ENCODE measurements at regions of chr3 and their contacts with region 1.

Region 1: GRCh38 chr3:17841190-17841828 is 98.9 kb upstream of the TBC1D5 start:
- DNase-seq: peak; percentile 45
- ATAC-seq: peak; percentile 99
- H3K4me3 ChIP-seq: no peak overlapping the region
- H3K27ac ChIP-seq: no peak overlapping the region
- H3K4me1 ChIP-seq: no peaks in the 10 kb centered on the region
- H3K27me3 ChIP-seq: no peaks in the 10 kb centered on the region
- CTCF ChIP-seq: peak; percentile 91 to 98 (median 95)
- POLR2A ChIP-seq: no peak
- RAD21 ChIP-seq: peak; percentile 96

Region 2: GRCh38 chr3:17258823-17259436 is 582.4 kb before region 1 on chr3:
- CTCF ChIA-PET with region 1: interaction called, 3 read pairs
- POLR2A ChIA-PET with region 1: no interaction called
- RAD21 ChIA-PET with region 1: no interaction called
- intact Hi-C with region 1: loop called (anchors 5 kb)
- DNase-seq: peak; percentile 13
- ATAC-seq: no peak
- H3K4me3 ChIP-seq: no peak overlapping the region
- H3K27ac ChIP-seq: no peak overlapping the region
- H3K4me1 ChIP-seq: no peaks in the 10 kb centered on the region
- H3K27me3 ChIP-seq: no peaks in the 10 kb centered on the region
- CTCF ChIP-seq: peak; percentile 46 to 69 (median 69); a peak in 5 of 6 replicates
- POLR2A ChIP-seq: no peak
- RAD21 ChIP-seq: peak; percentile 68

Region 3: DNA sequence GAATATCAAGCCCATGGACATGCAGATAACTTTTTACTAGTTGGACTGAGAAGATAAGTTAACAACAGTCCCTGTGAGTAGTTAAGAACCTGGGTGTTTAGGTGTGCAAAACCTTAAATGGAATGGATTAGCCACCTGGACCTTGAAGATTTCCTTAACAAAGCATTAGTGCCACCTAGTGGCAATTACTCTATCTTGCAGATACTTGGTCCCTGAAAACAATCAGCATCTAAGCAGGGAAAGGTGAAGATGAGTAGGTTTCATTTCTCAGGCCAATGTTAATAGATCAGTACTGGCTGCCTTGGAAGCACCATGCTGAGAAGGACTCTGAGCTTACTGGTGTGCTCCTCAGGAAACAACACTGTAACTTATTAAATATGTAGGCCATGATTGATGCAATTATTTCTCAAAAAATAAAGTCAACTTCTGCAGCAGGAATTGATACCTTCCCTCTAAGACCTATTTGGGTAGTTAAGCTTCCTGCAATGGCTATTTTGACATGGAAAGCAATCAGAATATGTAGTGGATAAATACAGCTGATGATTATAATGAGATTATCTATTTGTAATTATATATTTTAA is 428.3 kb before region 1 on chr3:
- CTCF ChIA-PET with region 1: interaction called, 11 read pairs
- POLR2A ChIA-PET with region 1: no interaction called
- RAD21 ChIA-PET with region 1: no interaction called
- intact Hi-C with region 1: no loop called
- DNase-seq: peak; percentile 56
- ATAC-seq: peak; percentile 84
- H3K4me3 ChIP-seq: no peak overlapping the region
- H3K27ac ChIP-seq: no peak overlapping the region
- H3K4me1 ChIP-seq: no peaks in the 10 kb centered on the region
- H3K27me3 ChIP-seq: no peaks in the 10 kb centered on the region
- CTCF ChIP-seq: peak; percentile 66 to 83 (median 74); a peak in 5 of 6 replicates
- POLR2A ChIP-seq: no peak
- RAD21 ChIP-seq: peak; percentile 82

Region 4: GRCh38 chr3:17544632-17545031 is 296.7 kb before region 1 on chr3:
- CTCF ChIA-PET with region 1: interaction called, 12 read pairs
- POLR2A ChIA-PET with region 1: no interaction called
- RAD21 ChIA-PET with region 1: interaction called in 1 of 2 experiments, 4 read pairs
- intact Hi-C with region 1: loop called (anchors 2 kb)
- DNase-seq: no peak
- ATAC-seq: no peak
- H3K4me3 ChIP-seq: no peak overlapping the region
- H3K27ac ChIP-seq: no peak overlapping the region
- H3K4me1 ChIP-seq: no peaks in the 10 kb centered on the region
- H3K27me3 ChIP-seq: no peaks in the 10 kb centered on the region
- CTCF ChIP-seq: peak in 2 of 3 experiments; percentile 11 to 36; a peak in 3 of 6 replicates
- POLR2A ChIP-seq: no peak
- RAD21 ChIP-seq: peak; percentile 36; the same call in 1 of the 2 replicates

Region 5: DNA sequence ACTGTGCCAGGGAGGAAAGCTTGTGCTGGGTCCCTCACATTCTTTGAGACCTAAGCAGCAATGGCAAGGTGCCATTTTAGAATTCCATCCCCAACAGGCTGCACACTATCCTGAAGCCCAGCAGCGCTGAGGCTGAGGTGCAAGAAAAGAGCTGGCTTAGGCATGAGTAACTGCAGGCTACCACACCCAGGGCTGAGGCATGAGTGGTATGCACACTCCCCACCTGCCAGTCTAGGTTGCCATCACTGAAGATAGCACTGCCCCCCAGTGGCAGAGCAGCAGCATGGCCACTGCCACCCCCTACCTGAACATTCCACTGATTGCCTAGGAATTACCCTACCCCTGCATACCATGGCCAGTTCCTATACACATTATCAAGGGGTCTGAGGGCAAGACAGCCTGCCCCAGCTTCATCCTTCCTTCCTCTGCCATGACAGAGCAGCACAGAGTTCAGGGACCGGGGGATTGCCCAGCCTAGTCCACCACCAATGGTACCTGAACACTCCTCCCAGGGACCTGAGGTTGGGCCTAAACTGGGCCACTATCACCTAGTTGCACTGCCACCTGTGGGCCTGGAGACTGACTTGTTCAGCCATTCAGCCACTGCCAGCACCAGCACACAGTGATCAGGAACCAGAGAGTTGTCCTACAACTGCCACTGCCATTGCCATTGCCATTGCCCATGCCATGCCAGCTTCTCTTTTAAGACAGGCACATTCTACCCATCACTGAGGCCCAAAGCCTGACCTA is 454.0 kb after region 1 on chr3:
- CTCF ChIA-PET with region 1: interaction called, 11 read pairs
- POLR2A ChIA-PET with region 1: no interaction called
- RAD21 ChIA-PET with region 1: no interaction called
- intact Hi-C with region 1: no loop called
- DNase-seq: peak; percentile 87
- ATAC-seq: peak; percentile 99
- H3K4me3 ChIP-seq: peak overlapping the region in 1 of 2 experiments; percentile 37; a peak in 2 of 4 replicates
- H3K27ac ChIP-seq: peak overlapping the region; percentile 45
- H3K4me1 ChIP-seq: peaks cover 8 to 21% of the 10 kb centered on the region in 2 experiments; a peak in 3 of 4 replicates
- H3K27me3 ChIP-seq: no peaks in the 10 kb centered on the region
- CTCF ChIP-seq: peak; percentile 68 to 96 (median 95)
- POLR2A ChIP-seq: no peak
- RAD21 ChIP-seq: peak; percentile 96

Measured in HCT116 (cell line).